Left ventricle myocardium inferior (tissue), 1 donor: ENCODE measurements at regions of chr6 and their contacts with region 1.

Region 1: DNA sequence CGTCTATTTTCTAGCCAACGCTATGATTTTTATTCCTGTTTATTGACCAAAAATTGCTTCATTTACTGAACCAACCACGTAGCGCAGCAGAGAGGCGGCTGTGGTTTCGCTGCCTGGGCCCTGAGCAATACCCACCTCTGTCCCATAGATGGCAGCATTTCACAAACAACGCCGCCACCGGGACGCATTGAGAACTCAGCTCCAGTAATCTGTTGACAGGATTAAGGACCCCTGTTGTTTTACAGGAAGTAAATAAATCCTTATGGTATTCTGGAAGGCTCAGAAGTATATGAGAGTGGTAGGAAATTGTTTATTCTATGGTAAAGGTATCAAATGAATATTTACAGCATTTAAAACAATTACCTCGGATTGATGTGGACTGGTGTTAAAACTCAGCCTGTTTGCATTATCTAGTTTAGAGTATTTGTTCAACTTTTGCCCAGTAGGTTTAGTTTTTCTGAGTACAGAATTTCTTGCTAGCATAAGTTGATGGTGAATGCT is 547.9 kb upstream of the SLC35B3 start:
- DNase-seq: peak; percentile 37
- H3K4me3 ChIP-seq: no peak overlapping the region
- H3K27ac ChIP-seq: no peak overlapping the region
- H3K4me1 ChIP-seq: no peaks in the 10 kb centered on the region
- H3K27me3 ChIP-seq: peaks cover 28% of the 10 kb centered on the region
- CTCF ChIP-seq: peak; percentile 96

Region 2: DNA sequence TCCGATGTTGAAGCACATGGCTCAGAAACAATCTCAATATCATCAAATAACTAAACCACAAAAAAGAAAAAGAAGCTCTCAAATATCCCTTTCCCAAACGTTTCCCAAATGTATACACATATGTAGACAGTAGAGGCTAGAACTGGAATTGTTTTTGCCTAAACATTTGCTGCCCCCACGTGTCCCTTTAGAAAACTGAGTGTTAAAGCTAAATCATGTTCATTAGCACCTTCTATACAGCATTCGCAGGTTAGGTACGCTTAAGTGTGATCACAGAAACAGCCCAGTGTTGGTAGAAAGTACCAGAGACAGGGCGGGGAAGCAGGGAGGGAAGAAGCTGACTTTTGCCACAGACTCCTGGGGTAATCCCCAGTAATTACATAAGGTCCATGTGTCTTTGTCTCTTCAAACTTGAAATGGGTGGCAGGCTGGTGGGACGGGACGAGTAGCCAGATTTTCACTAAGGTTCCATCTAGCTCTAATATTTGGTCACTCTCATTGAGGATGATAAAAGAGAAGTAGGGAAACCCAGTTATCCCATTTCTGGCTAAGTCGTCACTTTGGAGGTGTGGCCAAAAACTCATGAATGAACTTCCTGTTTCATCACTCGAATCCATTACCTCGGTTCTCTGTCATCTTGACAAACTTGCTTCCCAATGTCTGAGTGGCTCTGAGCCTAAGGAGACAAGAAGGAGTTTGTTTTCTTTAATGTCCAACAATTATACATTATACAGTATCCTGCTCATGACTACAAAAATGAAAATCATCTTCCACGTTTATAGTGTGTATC is 1446.6 kb after region 1 on chr6:
- intact Hi-C with region 1: loop called (anchors 10 kb)
- DNase-seq: no peak
- H3K4me3 ChIP-seq: no peak overlapping the region
- H3K27ac ChIP-seq: no peak overlapping the region
- H3K4me1 ChIP-seq: peaks cover 24% of the 10 kb centered on the region
- H3K27me3 ChIP-seq: peaks cover 92% of the 10 kb centered on the region
- CTCF ChIP-seq: peak; percentile 55